WTC11 (cell line): ENCODE measurements at regions of chr1 and their contacts with region 1.

Region 1: DNA sequence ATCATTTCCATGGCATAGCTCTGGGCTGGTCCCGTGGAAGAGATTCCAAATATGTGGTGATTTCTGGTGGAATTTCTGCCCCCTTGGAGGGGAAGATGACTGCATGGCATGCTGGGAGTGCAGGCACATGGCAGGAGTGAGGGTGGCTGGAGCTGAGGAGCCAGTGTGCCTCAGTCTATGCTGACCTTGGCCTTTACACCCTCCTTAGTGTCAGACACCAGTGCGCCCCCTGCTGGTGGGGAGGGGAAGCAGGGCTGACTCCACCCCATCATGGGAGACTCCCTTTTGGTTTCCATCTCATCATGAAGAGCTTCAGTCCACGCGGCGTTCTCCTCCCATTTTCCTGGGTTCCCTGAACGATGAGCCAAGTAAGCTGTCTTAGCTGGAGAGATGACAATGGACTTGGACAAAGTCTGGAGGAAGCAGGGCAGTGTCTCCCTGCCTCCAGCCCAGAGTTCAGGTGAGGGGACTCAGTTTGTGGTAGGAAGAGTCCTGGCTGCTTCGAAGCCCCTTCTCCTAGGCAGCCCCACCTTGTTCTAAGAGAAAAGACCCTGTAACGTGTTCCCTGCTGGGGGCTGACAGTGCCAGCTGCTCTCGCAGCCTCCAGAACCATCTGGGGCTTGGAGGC is 10.3 kb downstream of the ALX3 start:
- DNase-seq: peak; percentile 81
- ATAC-seq: peak; percentile 87
- H3K4me3 Mint-ChIP-seq: no peak overlapping the region
- H3K27ac Mint-ChIP-seq: no peak overlapping the region
- H3K4me1 Mint-ChIP-seq: no peaks in the 10 kb centered on the region
- H3K27me3 Mint-ChIP-seq: peaks cover 12% of the 10 kb centered on the region
- CTCF ChIP-seq: peak; percentile 96

Region 2: GRCh38 chr1:110034451-110035235 is 25.5 kb before region 1 on chr1 and contains the start of gene STRIP1:
- CTCF ChIA-PET with region 1: interaction called, 42 read pairs
- POLR2A ChIA-PET with region 1: interaction called, 4 read pairs
- DNase-seq: peak; percentile 88
- ATAC-seq: peak; percentile 83
- H3K4me3 Mint-ChIP-seq: peak within 1 kb of the TSS; percentile 92
- H3K27ac Mint-ChIP-seq: peak within 1 kb of the TSS; percentile 95
- H3K4me1 Mint-ChIP-seq: peaks cover 33% of the 10 kb centered on the region
- H3K27me3 Mint-ChIP-seq: no peaks in the 10 kb centered on the region
- CTCF ChIP-seq: no peak
- total RNA-seq, gene STRIP1: 36.8 to 42.8 TPM (median 38.2 TPM) in 3 replicates

Region 3: GRCh38 chr1:110097887-110098681 is 37.9 kb after region 1 on chr1:
- CTCF ChIA-PET with region 1: interaction called, 29 read pairs
- POLR2A ChIA-PET with region 1: interaction called, 3 read pairs
- DNase-seq: no peak
- ATAC-seq: no peak
- H3K4me3 Mint-ChIP-seq: no peak overlapping the region
- H3K27ac Mint-ChIP-seq: no peak overlapping the region
- H3K4me1 Mint-ChIP-seq: no peaks in the 10 kb centered on the region
- H3K27me3 Mint-ChIP-seq: peaks cover 4% of the 10 kb centered on the region
- CTCF ChIP-seq: no peak

Region 4: DNA sequence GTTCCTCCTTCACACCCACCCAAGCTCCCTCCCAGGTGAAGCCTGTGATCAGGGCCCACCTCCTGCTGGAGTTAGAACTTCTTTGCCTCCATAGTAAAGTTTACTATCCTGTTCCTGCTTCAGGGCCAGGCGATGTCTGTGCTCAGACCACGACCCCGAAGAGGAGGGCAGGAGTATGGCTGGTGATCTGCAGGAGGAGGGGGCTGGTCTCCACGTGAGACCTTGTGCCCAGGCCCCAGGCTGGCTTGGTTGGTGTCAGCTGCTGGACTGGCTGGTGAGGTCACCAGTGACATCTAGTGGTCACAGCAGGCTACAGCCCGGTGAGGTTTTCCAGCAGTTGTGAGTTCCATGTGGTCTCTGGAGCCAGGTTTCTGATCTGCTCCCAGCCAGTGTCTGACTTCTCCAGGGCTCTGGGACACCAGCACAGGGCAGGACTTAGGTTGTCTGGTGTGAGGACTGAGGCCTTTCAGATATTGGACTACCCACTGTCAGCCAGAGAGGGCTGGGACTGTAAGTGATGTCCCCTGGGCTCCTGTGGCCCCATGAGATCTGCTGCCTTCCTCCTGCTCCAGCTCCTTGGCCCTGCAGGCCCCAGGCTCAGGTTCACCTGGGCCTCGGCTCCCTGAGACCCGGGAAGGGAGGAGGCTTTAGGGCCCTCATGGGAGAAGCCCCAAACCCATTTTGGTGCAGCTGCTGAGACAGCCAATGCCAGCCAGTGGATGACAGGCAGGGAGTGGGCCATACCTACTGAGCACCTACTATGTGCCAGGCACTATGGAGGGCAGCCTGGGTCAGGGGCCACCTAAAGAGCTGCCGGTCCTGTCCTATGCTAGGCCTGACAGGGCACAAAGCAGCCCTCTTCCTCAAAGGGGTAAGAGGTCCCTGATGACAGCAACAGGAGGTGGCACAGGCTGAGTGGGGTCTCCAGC is 46.1 kb after region 1 on chr1:
- CTCF ChIA-PET with region 1: interaction called, 30 read pairs
- POLR2A ChIA-PET with region 1: no interaction called
- DNase-seq: peak; percentile 83
- ATAC-seq: peak; percentile 97
- H3K4me3 Mint-ChIP-seq: no peak overlapping the region
- H3K27ac Mint-ChIP-seq: no peak overlapping the region
- H3K4me1 Mint-ChIP-seq: no peaks in the 10 kb centered on the region
- H3K27me3 Mint-ChIP-seq: no peaks in the 10 kb centered on the region
- CTCF ChIP-seq: peak; percentile 81

Region 5: GRCh38 chr1:110118636-110119615 is 58.8 kb after region 1 on chr1:
- CTCF ChIA-PET with region 1: interaction called, 16 read pairs
- POLR2A ChIA-PET with region 1: no interaction called
- DNase-seq: no peak
- ATAC-seq: no peak
- H3K4me3 Mint-ChIP-seq: no peak overlapping the region
- H3K27ac Mint-ChIP-seq: no peak overlapping the region
- H3K4me1 Mint-ChIP-seq: 0 out of 2 replicates have a peak, but pooled peaks cover 4% of the 10 kb centered on the region
- H3K27me3 Mint-ChIP-seq: peaks cover 15% of the 10 kb centered on the region
- CTCF ChIP-seq: no peak